Ascending aorta (tissue), 2 donors: ENCODE measurements at regions of chr10 and their contacts with region 1.

Region 1: GRCh38 chr10:109883859-109884771 is 39.2 kb downstream of the XPNPEP1 start:
- DNase-seq: peak in 1 of 2 donors; percentile 84
- H3K4me3 ChIP-seq: peak overlapping the region in 1 of 2 donors; percentile 45
- H3K27ac ChIP-seq: peak overlapping the region; percentile 60 to 68
- H3K4me1 ChIP-seq: peaks cover 5 to 24% of the 10 kb centered on the region in 2 donors
- H3K27me3 ChIP-seq: no peaks in the 10 kb centered on the region
- CTCF ChIP-seq: peak; percentile 95 to 97 (median 95)

Region 2: GRCh38 chr10:109007514-109007913 is 876.6 kb before region 1 on chr10:
- intact Hi-C with region 1: no loop called
- DNase-seq: no peak
- H3K4me3 ChIP-seq: no peak overlapping the region
- H3K27ac ChIP-seq: no peak overlapping the region
- H3K4me1 ChIP-seq: no peaks in the 10 kb centered on the region
- H3K27me3 ChIP-seq: no peaks in the 10 kb centered on the region
- CTCF ChIP-seq: no peak

Region 3: DNA sequence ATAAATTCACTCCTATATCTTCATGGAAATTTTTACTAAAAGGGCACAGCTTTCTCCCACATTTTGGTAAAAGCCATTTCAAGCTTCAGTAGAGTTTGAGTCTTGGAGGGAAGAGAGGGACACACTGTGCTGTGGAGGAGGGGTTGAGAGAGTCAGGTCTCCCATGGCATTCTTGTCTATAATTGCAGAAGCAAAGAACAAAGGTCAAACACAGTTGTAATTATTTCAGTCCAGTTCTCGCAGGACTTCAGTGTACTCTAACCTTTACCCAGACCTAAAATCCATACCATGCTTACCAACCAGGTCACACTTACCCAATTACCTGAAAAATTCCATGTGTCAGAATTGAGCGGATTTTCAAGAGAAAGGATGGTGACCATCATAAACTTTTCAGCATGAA is 259.2 kb before region 1 on chr10:
- intact Hi-C with region 1: no loop called
- DNase-seq: no peak
- H3K4me3 ChIP-seq: no peak overlapping the region
- H3K27ac ChIP-seq: no peak overlapping the region
- H3K4me1 ChIP-seq: no peaks in the 10 kb centered on the region
- H3K27me3 ChIP-seq: no peaks in the 10 kb centered on the region
- CTCF ChIP-seq: no peak

Region 4: GRCh38 chr10:109922976-109923921 is 39.1 kb after region 1 on chr10 and contains the start of gene XPNPEP1:
- intact Hi-C with region 1: loop called (anchors 2 kb)
- DNase-seq: peak; percentile 65 to 94
- H3K4me3 ChIP-seq: peak within 1 kb of the TSS; percentile 94 to 97
- H3K27ac ChIP-seq: peak within 1 kb of the TSS; percentile 93 to 98
- H3K4me1 ChIP-seq: peaks cover 3 to 10% of the 10 kb centered on the region in 2 donors
- H3K27me3 ChIP-seq: no peaks in the 10 kb centered on the region
- CTCF ChIP-seq: peak in 2 of 3 experiments; percentile 5 to 12
- total RNA-seq, gene XPNPEP1: 212 TPM

Region 5: GRCh38 chr10:110016039-110016438 is 131.9 kb after region 1 on chr10:
- intact Hi-C with region 1: loop called (anchors 1 kb)
- DNase-seq: no peak
- H3K4me3 ChIP-seq: no peak overlapping the region
- H3K27ac ChIP-seq: peak overlapping the region; percentile 44 to 50
- H3K4me1 ChIP-seq: peaks cover 0 to 33% of the 10 kb centered on the region in 2 donors
- H3K27me3 ChIP-seq: no peaks in the 10 kb centered on the region
- CTCF ChIP-seq: peak; percentile 22 to 50 (median 32)

Region 6: GRCh38 chr10:110279407-110279986 is 395.4 kb after region 1 on chr10:
- intact Hi-C with region 1: loop called (anchors 5 kb)
- DNase-seq: peak in 1 of 2 donors; percentile 81
- H3K4me3 ChIP-seq: peak overlapping the region; percentile 14 to 33
- H3K27ac ChIP-seq: peak overlapping the region; percentile 30 to 42
- H3K4me1 ChIP-seq: peaks cover 0 to 46% of the 10 kb centered on the region in 2 donors
- H3K27me3 ChIP-seq: no peaks in the 10 kb centered on the region
- CTCF ChIP-seq: peak; percentile 66 to 78 (median 76)

Region 7: DNA sequence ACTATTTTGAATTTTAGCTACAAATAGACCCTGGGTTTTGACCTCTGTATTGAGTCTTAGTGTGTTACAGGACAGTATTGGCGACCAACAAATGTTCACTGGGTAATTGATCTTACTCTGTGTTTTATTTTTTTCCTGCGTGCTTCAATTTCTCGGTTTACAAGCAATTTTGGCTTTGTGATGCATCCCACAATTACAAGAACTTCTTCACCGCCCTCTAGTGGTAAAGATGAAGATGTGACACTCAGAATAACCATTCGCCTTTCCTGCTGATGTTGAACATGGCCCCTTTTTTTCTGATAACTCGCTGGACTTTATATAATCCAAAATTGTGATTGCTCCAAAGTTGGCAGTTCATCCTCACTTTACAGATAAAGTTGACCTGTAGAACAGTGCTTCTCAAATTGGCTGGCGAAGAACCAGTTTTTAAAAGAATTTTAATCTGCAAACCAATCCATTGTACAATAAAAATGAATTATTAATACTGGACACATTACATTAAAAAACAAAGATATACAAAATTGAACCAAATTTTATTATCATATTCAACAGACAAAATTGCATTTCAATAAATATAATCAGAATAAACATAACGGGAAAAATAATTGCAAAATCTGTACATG is 663.1 kb after region 1 on chr10:
- intact Hi-C with region 1: loop called (anchors 5 kb)
- DNase-seq: no peak
- H3K4me3 ChIP-seq: no peak overlapping the region
- H3K27ac ChIP-seq: no peak overlapping the region
- H3K4me1 ChIP-seq: no peaks in the 10 kb centered on the region
- H3K27me3 ChIP-seq: no peaks in the 10 kb centered on the region
- CTCF ChIP-seq: peak; percentile 49 to 86 (median 82)